CD8-positive, alpha-beta T cell (primary cell): ENCODE measurements at regions of chr20 and their contacts with region 1.

Region 1: GRCh38 chr20:543369-544152 is at the start of gene CSNK2A1:
- DNase-seq: peak; percentile 95 to 99 (median 96)
- ATAC-seq: peak; percentile 90
- H3K4me3 ChIP-seq: peak within 1 kb of the TSS; percentile 36 to 98
- H3K4me3 Mint-ChIP-seq: peak within 1 kb of the TSS; percentile 96
- H3K27ac ChIP-seq: peak within 1 kb of the TSS; percentile 74 to 92
- H3K27ac Mint-ChIP-seq: peak within 1 kb of the TSS; percentile 100
- H3K4me1 ChIP-seq: peaks cover 27% of the 10 kb centered on the region
- H3K4me1 Mint-ChIP-seq: peaks cover 55% of the 10 kb centered on the region
- H3K27me3 ChIP-seq: no peaks in the 10 kb centered on the region
- H3K27me3 Mint-ChIP-seq: no peaks in the 10 kb centered on the region
- CTCF ChIP-seq: no peak
- total RNA-seq, gene CSNK2A1: 63.6 to 66.0 TPM

Region 2: GRCh38 chr20:297098-297924 is 246.2 kb before region 1 on chr20 and contains the start of gene ZCCHC3:
- CTCF ChIA-PET with region 1: no interaction called
- POLR2A ChIA-PET with region 1: no interaction called
- intact Hi-C with region 1: loop called (anchors 1 to 2 kb)
- DNase-seq: peak; percentile 58 to 93 (median 83)
- ATAC-seq: peak; percentile 85
- H3K4me3 ChIP-seq: peak within 1 kb of the TSS; percentile 86 to 98
- H3K4me3 Mint-ChIP-seq: peak within 1 kb of the TSS; percentile 99
- H3K27ac ChIP-seq: peak within 1 kb of the TSS; percentile 88 to 90
- H3K27ac Mint-ChIP-seq: peak within 1 kb of the TSS; percentile 98
- H3K4me1 ChIP-seq: peaks cover 28% of the 10 kb centered on the region
- H3K4me1 Mint-ChIP-seq: peaks cover 44% of the 10 kb centered on the region
- H3K27me3 ChIP-seq: no peaks in the 10 kb centered on the region
- H3K27me3 Mint-ChIP-seq: no peaks in the 10 kb centered on the region
- CTCF ChIP-seq: no peak
- total RNA-seq, gene ZCCHC3: 21.8 to 22.0 TPM

Region 3: DNA sequence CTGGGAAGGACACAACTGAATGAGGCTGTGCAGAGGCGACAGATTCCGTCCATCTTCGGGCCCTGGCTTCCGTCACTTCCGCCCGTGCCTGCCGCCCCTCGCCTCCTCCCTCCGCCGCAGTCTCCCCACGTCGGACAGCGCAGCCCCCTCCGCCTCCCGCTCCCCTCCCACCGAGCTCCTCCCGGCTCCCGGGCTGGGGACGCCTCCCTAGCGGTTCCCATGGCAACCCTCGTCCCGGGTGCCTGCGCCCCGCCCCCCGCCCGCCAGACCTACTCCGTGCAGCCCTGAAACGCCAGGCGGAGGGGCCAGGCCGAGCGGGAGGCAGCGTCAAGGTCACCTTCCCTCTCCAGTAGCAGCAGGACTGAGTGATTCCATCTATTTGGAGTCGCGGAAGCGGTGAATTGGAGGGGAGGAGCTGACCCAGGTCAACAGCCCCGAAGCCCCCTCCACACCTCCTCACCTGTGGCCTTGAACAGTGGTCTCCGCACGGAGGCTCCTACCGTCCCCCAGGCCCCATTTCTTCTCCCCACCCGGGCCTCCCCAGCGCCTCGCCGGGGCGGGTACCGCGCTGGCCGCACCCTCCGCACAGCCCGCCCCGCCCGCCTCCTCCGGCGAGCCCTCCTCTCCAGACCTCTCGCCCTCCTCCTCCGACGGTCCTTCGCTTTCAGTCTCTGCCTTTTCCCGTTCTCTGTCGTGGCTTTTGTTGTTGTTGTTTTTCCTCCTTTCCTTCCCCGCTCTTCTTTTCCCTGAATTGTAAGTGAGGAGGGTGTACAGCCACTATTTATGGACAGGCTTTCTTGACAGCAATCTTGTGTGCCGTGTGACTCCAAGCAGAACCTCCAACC is 195.7 kb before region 1 on chr20:
- CTCF ChIA-PET with region 1: no interaction called
- POLR2A ChIA-PET with region 1: no interaction called
- intact Hi-C with region 1: loop called in 1 of 2 experiments (anchors 2 kb)
- DNase-seq: peak in 7 of 9 experiments; percentile 21 to 75 (median 56)
- ATAC-seq: peak; percentile 80
- H3K4me3 ChIP-seq: peak overlapping the region; percentile 76 to 89
- H3K4me3 Mint-ChIP-seq: peak overlapping the region; percentile 88
- H3K27ac ChIP-seq: peak overlapping the region; percentile 40 to 44
- H3K27ac Mint-ChIP-seq: peak overlapping the region; percentile 79
- H3K4me1 ChIP-seq: no peaks in the 10 kb centered on the region
- H3K4me1 Mint-ChIP-seq: peaks cover 13% of the 10 kb centered on the region
- H3K27me3 ChIP-seq: no peaks in the 10 kb centered on the region
- H3K27me3 Mint-ChIP-seq: no peaks in the 10 kb centered on the region
- CTCF ChIP-seq: no peak

Region 4: GRCh38 chr20:462199-462991 is 81.2 kb before region 1 on chr20 and contains the start of gene TBC1D20:
- CTCF ChIA-PET with region 1: no interaction called
- POLR2A ChIA-PET with region 1: interaction called, 3 read pairs
- intact Hi-C with region 1: loop called (anchors 1 to 2 kb)
- DNase-seq: peak; percentile 72 to 95 (median 84)
- ATAC-seq: peak; percentile 95
- H3K4me3 ChIP-seq: peak within 1 kb of the TSS; percentile 74 to 87
- H3K4me3 Mint-ChIP-seq: peak within 1 kb of the TSS; percentile 99
- H3K27ac ChIP-seq: peak within 1 kb of the TSS; percentile 67 to 77
- H3K27ac Mint-ChIP-seq: peak within 1 kb of the TSS; percentile 96
- H3K4me1 ChIP-seq: peaks cover 30% of the 10 kb centered on the region
- H3K4me1 Mint-ChIP-seq: peaks cover 45% of the 10 kb centered on the region
- H3K27me3 ChIP-seq: no peaks in the 10 kb centered on the region
- H3K27me3 Mint-ChIP-seq: no peaks in the 10 kb centered on the region
- CTCF ChIP-seq: no peak
- total RNA-seq, gene TBC1D20: 18.5 to 20.3 TPM

Region 5: DNA sequence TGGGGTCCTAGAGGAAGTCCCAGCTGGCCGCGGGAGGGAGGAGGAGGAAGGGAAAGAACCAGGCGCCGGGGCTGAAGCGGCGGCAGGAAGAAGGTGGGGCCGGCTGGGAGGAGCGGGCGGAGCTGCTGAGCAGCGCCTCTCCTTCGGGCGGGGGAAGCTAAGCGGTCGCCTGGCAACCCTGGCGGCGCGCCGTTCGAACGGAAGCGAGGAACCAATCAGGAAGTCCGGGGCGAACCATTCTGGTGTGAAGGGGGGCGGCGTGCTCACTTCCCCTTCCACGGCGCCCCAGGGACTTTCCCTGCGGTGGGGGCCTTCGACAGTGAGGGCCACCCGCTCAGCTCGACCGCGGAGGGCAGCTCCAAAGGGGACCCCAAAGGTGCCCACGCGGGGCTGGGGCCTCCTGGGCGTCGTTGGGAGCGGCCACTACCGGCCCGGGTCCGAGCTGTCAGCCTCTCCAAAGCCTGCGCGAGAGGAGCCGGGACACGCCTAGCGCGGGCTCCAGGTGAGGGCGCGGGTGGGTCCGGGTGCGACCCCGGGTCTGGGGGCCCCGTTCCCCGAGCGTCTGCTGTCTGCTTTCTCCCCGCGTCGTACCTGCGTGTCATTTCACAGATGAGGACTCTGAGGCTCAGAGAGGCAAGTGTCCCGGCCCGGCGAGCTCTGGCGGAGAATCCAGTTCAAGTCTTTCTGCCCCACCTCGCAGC is 290.0 kb after region 1 on chr20 and contains the start of gene FAM110A:
- CTCF ChIA-PET with region 1: no interaction called
- POLR2A ChIA-PET with region 1: no interaction called
- intact Hi-C with region 1: loop called in 1 of 2 experiments (anchors 2 kb)
- DNase-seq: peak; percentile 89 to 99 (median 96)
- ATAC-seq: peak; percentile 96
- H3K4me3 ChIP-seq: peak within 1 kb of the TSS; percentile 90 to 96
- H3K4me3 Mint-ChIP-seq: peak within 1 kb of the TSS; percentile 91
- H3K27ac ChIP-seq: peak within 1 kb of the TSS; percentile 85 to 96
- H3K27ac Mint-ChIP-seq: peak within 1 kb of the TSS; percentile 82
- H3K4me1 ChIP-seq: peaks cover 27% of the 10 kb centered on the region
- H3K4me1 Mint-ChIP-seq: peaks cover 43% of the 10 kb centered on the region
- H3K27me3 ChIP-seq: no peaks in the 10 kb centered on the region
- H3K27me3 Mint-ChIP-seq: no peaks in the 10 kb centered on the region
- CTCF ChIP-seq: no peak
- total RNA-seq, gene FAM110A: 6.7 to 7.7 TPM